Panc1 (cell line): ENCODE measurements at regions of chr1 and their contacts with region 1.

Region 1: GRCh38 chr1:163410073-163410999 is 88.6 kb downstream of the NUF2 start:
- DNase-seq: peak; percentile 22
- ATAC-seq: peak; percentile 54; the same call in 1 of the 2 replicates
- H3K4me3 ChIP-seq: no peak overlapping the region
- H3K27ac ChIP-seq: no peak overlapping the region
- H3K4me1 ChIP-seq: no peaks in the 10 kb centered on the region
- H3K27me3 ChIP-seq: no peaks in the 10 kb centered on the region
- CTCF ChIP-seq: peak; percentile 81

Region 2: DNA sequence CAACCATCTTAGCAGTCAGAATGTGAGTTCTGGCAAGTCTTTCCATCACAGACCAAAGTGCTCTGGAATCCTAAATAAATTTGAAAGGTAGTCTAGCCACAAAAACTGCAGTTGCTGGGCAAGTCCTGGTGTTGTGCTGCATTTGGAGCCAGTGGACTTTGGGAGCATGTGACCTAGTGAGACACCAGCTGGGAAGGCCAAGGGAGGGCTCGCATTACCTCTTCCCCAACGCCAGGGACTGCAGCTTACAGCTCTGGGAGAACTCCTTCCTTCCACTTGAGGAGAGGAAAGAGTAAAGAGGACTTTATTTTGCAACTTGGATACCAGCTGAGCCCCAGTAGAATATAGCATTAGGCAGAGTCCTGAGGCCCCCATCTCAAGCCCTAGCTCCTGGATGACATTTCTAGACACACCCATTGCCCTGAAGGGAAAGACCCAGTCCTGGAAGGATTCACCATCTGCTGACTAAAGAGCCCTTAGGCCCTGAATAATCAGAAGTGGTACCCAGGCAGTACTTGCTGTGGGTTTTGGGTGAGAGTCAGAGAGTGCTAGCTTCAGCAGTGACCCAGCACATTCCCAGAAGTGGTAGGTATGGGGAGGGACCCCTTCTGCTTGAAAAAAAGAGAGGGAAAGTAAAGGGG is 102.1 kb after region 1 on chr1:
- CTCF ChIA-PET with region 1: no interaction called
- POLR2A ChIA-PET with region 1: no interaction called
- in situ Hi-C with region 1: no loop called
- intact Hi-C with region 1: no loop called
- DNase-seq: no peak
- ATAC-seq: no peak
- H3K4me3 ChIP-seq: no peak overlapping the region
- H3K27ac ChIP-seq: no peak overlapping the region
- H3K4me1 ChIP-seq: no peaks in the 10 kb centered on the region
- H3K27me3 ChIP-seq: no peaks in the 10 kb centered on the region
- CTCF ChIP-seq: no peak

Region 3: GRCh38 chr1:163528710-163529348 is 118.5 kb after region 1 on chr1:
- CTCF ChIA-PET with region 1: no interaction called
- POLR2A ChIA-PET with region 1: no interaction called
- in situ Hi-C with region 1: no loop called
- intact Hi-C with region 1: loop called (anchors 5 kb)
- DNase-seq: peak; percentile 10
- ATAC-seq: no peak; the same call in 1 of the 2 replicates
- H3K4me3 ChIP-seq: no peak overlapping the region
- H3K27ac ChIP-seq: no peak overlapping the region
- H3K4me1 ChIP-seq: no peaks in the 10 kb centered on the region
- H3K27me3 ChIP-seq: no peaks in the 10 kb centered on the region
- CTCF ChIP-seq: peak; percentile 65; the same call in 1 of the 2 replicates

Region 4: DNA sequence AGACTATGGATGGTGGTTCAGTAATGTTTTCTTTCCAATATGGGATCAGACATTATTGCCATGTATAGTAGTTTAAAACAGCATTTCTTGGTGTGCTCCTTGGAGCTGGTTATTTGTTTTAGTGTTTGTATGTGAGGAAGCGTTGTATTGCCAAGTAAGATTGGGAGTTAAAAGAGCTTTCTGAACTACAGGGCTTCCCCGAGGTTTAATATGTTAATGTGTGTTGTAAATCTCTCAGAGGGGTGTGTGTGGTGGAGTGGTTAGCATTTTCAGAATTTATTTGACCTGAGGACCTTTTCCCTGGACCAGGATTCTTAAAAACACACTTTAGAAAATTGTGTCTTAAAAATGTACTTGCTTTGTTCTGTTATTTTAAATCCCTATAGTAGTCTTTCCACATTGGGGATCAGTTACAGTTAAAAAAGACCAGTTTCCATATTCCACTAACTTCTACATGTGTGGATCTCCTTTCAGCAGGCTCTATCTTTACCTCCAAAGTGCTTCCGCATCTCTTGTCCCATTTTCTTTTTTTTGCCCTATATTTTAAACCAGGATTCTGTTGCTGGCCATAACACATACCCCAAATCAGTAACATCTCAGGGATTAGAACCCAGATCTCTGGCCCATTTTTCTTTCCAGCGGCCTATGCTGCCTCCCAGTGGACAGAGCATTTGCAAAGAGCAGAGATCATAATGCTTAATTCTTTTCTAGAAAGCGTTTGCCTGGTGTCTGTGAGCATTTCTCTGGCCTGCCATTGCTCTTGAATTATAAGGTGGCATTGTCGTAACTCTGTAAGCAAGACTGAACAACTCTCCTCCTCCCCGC is 1207.3 kb after region 1 on chr1:
- CTCF ChIA-PET with region 1: no interaction called
- POLR2A ChIA-PET with region 1: no interaction called
- in situ Hi-C with region 1: no loop called
- intact Hi-C with region 1: loop called (anchors 10 kb)
- DNase-seq: peak; percentile 7
- ATAC-seq: no peak
- H3K4me3 ChIP-seq: no peak overlapping the region
- H3K27ac ChIP-seq: no peak overlapping the region
- H3K4me1 ChIP-seq: no peaks in the 10 kb centered on the region
- H3K27me3 ChIP-seq: no peaks in the 10 kb centered on the region
- CTCF ChIP-seq: peak; percentile 73

Region 5: GRCh38 chr1:165073185-165074007 is 1663.1 kb after region 1 on chr1:
- CTCF ChIA-PET with region 1: no interaction called
- POLR2A ChIA-PET with region 1: no interaction called
- in situ Hi-C with region 1: no loop called
- intact Hi-C with region 1: loop called (anchors 5 kb)
- DNase-seq: peak; percentile 17
- ATAC-seq: peak; percentile 81
- H3K4me3 ChIP-seq: no peak overlapping the region
- H3K27ac ChIP-seq: no peak overlapping the region
- H3K4me1 ChIP-seq: no peaks in the 10 kb centered on the region
- H3K27me3 ChIP-seq: no peaks in the 10 kb centered on the region; the same call in 1 of the 2 replicates
- CTCF ChIP-seq: peak; percentile 78